RWPE1 (cell line): ENCODE measurements at regions of chr11 and their contacts with region 1.

Region 1: GRCh38 chr11:57644748-57645688 is 4.7 kb downstream of the YPEL4 start:
- DNase-seq: peak; percentile 75
- H3K27ac ChIP-seq: peak overlapping the region; percentile 39
- CTCF ChIP-seq: peak; percentile 86

Region 2: DNA sequence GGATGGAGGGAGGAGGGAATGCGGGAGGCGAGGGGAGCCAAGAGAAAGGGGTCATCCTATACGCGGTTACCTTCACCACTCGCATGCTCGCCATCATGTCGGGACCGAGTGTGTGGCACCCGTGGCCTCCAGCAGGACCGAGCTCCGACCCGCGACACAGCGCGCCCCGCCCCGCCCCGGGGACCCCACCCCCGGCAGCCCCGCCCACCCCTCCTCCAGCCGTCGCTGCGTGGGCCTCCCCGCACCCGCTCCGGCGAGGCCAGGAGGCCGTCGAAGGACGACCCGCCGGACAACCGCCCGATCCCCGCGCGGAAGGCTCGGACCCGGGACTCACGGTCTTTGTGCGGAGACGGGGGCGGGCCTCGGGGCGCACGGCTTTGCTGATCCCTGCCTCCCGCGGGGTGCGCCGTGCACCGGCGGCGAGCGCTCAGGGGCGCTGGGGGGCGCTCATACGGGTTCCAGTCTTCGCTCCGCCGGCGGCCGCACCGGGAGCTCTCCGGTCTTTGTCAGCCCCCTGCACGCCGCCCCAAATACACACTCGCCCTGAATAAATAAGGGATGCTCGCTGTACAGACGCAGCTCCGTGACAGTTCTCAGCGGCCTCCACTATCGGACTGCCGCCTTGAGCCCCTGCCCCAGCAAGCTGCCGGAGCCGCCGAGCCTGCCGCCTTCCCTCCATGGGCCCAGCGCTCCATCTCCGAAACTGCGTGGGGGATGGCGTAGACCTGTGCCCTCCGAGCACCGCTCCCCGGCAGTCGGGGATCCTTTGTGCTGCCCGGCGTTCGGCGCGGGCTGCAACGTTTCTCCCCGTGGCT is 77.3 kb before region 1 on chr11 and contains the start of gene UBE2L6:
- CTCF ChIA-PET with region 1: interaction called, 72 read pairs
- POLR2A ChIA-PET with region 1: no interaction called
- DNase-seq: peak; percentile 82
- H3K27ac ChIP-seq: peak within 1 kb of the TSS; percentile 85
- CTCF ChIP-seq: no peak